ENCODE measurements at regions of chr2 and their contacts with region 1.

Region 1: GRCh38 chr2:134301099-134301927 is 47.4 kb downstream of the MGAT5 start:
- DNase-seq: no peak
- H3K4me3 Mint-ChIP-seq: no peak overlapping the region
- H3K27ac Mint-ChIP-seq: no peak overlapping the region
- H3K4me1 Mint-ChIP-seq: peaks cover 49% of the 10 kb centered on the region
- H3K27me3 Mint-ChIP-seq: no peaks in the 10 kb centered on the region

Region 2: DNA sequence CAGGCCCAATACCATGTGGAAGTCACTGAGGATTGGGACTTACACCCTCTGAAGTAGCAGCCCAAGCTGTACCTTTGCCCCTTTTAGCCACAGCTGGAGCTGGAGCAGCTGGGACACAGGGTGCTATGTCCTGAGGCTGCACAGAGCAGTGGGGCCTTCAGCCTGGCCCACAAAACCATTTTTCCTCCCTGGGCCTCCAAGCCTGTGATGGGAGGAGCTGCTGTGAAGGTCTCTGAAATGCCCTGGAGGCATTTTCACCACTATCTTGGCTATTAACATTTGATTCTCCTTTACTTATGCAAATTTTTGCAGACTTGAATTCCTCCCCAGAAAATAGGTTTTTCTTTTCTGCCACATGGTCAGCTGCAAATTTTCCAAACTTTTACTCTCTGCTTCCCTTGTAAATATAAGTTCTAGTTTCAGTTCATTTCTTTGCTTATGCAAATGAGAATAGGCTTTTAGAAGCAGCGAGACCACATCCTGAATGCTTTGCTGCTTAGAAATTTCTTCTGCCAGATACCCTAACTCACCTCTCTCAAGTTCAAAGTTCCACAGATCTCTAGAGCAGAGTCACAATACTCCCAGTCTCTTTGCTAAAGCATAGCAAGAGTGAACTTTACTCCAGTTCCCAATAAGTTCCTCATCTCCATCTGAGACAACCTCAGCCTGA is 261.3 kb before region 1 on chr2:
- CTCF ChIA-PET with region 1: no interaction called
- POLR2A ChIA-PET with region 1: no interaction called
- intact Hi-C with region 1: no loop called
- DNase-seq: no peak
- H3K4me3 Mint-ChIP-seq: no peak overlapping the region
- H3K27ac Mint-ChIP-seq: no peak overlapping the region
- H3K4me1 Mint-ChIP-seq: peaks cover 26% of the 10 kb centered on the region
- H3K27me3 Mint-ChIP-seq: peaks cover 2% of the 10 kb centered on the region

Region 3: GRCh38 chr2:134290358-134290757 is 11.0 kb before region 1 on chr2:
- CTCF ChIA-PET with region 1: interaction called, 7 read pairs
- POLR2A ChIA-PET with region 1: interaction called, 6 read pairs
- intact Hi-C with region 1: loop called (anchors 1 kb)
- DNase-seq: peak; percentile 31
- H3K4me3 Mint-ChIP-seq: no peak overlapping the region
- H3K27ac Mint-ChIP-seq: no peak overlapping the region
- H3K4me1 Mint-ChIP-seq: peaks cover 21% of the 10 kb centered on the region
- H3K27me3 Mint-ChIP-seq: no peaks in the 10 kb centered on the region

Region 4: GRCh38 chr2:134320930-134321329 is 19.6 kb after region 1 on chr2:
- CTCF ChIA-PET with region 1: interaction called, 3 read pairs
- POLR2A ChIA-PET with region 1: interaction called, 3 read pairs
- intact Hi-C with region 1: loop called (anchors 2 kb)
- DNase-seq: peak; percentile 64
- H3K4me3 Mint-ChIP-seq: no peak overlapping the region
- H3K27ac Mint-ChIP-seq: no peak overlapping the region
- H3K4me1 Mint-ChIP-seq: peaks cover 45% of the 10 kb centered on the region
- H3K27me3 Mint-ChIP-seq: no peaks in the 10 kb centered on the region

Measured in activated CD4-positive, alpha-beta memory T cell treated with anti-CD3 and anti-CD28 coated beads for 36 hours (primary cell).